Activated naive CD4-positive, alpha-beta T cell treated with anti-CD3 and anti-CD28 coated beads, Interleukin-2, amount 10 ng/mL, durations not matched to agents 7 days and 5 days (primary cell): ENCODE measurements at regions of chr10 and their contacts with region 1.

Region 1: DNA sequence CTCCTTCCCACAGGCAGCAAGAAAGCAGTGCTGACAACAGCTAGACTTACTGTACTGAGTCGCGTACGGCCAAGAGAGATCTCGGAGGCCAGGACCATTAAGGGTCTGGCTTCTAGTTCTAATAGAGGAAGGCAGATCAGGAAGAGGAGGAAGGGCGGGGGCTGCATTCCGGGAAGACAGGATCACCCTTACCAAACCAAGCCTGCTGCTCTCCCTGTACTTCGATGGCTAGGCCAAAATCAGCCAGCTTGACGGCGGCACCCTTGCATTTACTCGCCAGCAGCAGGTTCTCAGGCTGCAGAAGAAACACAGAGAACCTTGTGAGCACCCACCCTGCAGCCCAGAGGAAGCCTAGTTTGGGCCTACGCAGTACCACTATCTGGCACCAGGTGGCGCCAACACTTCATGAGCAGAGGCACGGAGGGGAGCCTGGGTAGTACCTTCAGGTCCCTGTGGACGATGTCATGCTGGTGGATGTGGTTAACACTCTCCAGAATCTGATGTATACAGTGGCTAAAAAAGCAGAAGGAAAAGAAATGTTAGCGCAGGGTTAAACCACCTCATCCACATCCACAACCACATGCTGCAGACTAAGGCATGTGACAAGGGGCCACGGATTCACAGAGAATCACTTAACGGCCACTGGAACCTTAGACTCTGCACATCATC is 25.4 kb downstream of the CAMK2G start:
- DNase-seq: peak; percentile 95
- H3K4me3 Mint-ChIP-seq: no peak overlapping the region
- H3K27ac Mint-ChIP-seq: peak overlapping the region; percentile 80
- H3K4me1 Mint-ChIP-seq: peaks cover 21% of the 10 kb centered on the region
- H3K27me3 Mint-ChIP-seq: no peaks in the 10 kb centered on the region

Region 2: DNA sequence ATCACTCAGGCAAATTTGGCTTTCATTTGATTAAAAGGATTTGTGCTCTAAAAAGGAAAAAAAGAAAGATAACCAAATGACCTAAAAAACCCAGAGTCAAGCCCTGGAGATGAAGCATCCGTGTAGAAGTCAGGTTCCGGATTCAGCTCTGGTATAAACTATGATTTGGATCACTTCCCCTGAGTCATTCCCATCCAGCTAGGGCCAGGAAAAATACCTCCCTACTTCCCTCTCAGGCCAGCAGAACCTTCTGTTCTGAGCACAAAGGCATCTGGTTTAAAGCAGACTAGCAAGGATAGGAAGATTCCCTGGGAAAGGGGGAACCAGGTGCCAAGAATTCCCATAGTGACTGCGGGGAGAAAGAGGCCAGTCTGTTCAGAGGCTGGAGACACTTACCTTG is 11.9 kb before region 1 on chr10:
- CTCF ChIA-PET with region 1: interaction called, 11 read pairs
- DNase-seq: no peak
- H3K4me3 Mint-ChIP-seq: no peak overlapping the region
- H3K27ac Mint-ChIP-seq: peak overlapping the region; percentile 42
- H3K4me1 Mint-ChIP-seq: no peaks in the 10 kb centered on the region
- H3K27me3 Mint-ChIP-seq: no peaks in the 10 kb centered on the region

Region 3: DNA sequence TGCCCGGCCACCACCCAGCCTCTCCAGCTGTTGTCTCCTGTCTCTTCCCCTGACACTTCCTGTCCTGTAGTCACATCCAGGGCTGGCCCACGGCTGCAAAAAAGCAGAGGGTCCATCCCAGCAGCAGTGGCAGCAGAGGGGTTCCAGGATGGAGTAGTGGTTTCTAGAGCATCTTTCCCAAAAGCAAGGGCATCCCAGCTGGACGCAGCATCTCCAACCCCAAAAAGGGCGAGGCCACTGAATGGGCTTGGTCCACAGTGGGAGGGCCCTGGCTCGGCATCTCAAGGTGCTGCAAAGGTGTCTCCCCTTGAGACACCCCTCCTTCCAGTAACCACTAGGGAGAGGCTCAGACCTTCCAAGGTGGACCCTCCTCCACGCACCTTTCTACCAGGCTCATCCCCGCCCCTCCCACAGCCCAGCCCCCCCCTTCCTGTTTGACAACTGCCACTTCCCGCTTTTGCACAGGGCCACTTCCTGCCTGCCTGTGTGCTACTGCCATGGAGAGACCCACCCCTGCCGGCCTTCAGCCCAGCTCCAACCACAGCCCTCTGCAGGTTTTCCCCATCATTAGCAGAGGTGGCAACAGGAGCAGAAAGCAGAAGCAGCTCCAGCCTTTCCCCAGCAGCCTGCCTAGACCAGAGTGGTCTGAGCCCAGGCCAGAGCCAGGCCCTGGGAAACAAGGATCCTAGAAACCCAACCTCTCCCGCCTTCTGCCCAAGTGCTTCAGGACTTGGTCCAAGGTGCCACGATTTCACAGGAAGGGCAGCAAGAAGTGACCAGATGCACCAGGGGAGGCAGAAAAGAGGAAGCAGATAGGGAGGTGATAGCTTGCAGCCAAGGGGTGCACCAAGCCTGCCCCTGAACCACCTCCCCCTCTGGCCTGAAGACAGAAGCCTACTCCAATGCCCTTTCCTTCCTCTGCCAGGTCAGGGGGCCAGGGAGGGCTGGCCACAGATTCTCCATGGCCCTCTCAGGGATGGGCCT is 16.8 kb after region 1 on chr10:
- CTCF ChIA-PET with region 1: interaction called, 19 read pairs
- DNase-seq: peak; percentile 74
- H3K4me3 Mint-ChIP-seq: peak overlapping the region; percentile 80
- H3K27ac Mint-ChIP-seq: peak overlapping the region; percentile 96
- H3K4me1 Mint-ChIP-seq: peaks cover 85% of the 10 kb centered on the region
- H3K27me3 Mint-ChIP-seq: no peaks in the 10 kb centered on the region